Left ventricle myocardium inferior (tissue), 1 donor: ENCODE measurements at regions of chr2 and their contacts with region 1.

Region 1: DNA sequence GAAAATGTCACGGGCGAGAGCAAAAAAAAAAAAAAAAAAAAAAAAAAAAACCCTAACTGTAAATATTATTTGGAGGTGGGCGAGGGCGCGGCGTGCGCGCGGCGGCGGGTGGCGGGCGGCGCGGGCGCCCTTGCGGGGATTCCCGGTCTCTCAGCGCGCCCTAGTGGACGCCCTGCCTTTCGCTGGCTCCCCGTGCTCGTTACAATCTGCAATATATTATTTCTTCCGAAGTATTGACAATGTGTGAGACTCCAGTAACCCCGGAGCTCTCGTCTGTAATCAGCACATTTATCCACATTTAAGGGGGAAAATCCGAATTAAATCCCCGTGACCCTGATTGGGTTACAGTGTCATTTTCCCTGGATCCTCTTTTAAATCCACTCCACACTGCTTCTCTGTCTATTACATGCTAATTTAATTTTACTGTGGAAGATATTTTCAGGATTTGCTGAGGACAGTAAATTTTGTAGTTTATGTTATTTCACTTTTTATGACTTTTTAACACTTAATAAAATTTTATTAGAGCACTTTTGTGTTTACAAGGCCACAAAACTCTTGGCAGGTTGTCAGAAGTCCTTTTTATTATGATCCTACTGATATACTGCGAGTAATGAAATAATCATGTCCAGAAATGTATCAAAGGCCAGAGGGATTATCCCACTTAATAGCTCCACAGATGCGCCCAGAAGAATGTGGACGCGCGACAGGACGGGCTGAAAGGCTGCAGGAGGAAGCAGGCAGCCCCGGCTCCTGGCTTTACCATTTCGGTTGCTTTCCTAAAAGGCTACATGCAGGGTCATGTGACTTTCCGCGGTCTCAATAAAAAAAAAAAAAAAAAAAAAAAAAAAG is 369.1 kb downstream of the MTX2 start:
- DNase-seq: peak; percentile 62
- H3K4me3 ChIP-seq: peak overlapping the region; percentile 72
- H3K27ac ChIP-seq: no peak overlapping the region
- H3K4me1 ChIP-seq: peaks cover 8% of the 10 kb centered on the region
- H3K27me3 ChIP-seq: peaks cover 98% of the 10 kb centered on the region
- CTCF ChIP-seq: peak; percentile 85

Region 2: GRCh38 chr2:176554101-176555048 is 84.0 kb before region 1 on chr2:
- intact Hi-C with region 1: loop called (anchors 10 kb)
- DNase-seq: no peak
- H3K4me3 ChIP-seq: peak overlapping the region; percentile 68
- H3K27ac ChIP-seq: peak overlapping the region; percentile 62
- H3K4me1 ChIP-seq: peaks cover 20% of the 10 kb centered on the region
- H3K27me3 ChIP-seq: peaks cover 62% of the 10 kb centered on the region
- CTCF ChIP-seq: peak; percentile 82